Activated CD4-positive, alpha-beta T cell treated with anti-CD3 and anti-CD28 coated beads for 36 hours (primary cell): ENCODE measurements at regions of chr18 and their contacts with region 1.

Region 1: GRCh38 chr18:3129053-3129864 is 90.5 kb downstream of the MYOM1 start:
- DNase-seq: peak; percentile 92
- ATAC-seq: peak; percentile 99
- H3K4me3 Mint-ChIP-seq: no peak overlapping the region
- H3K27ac Mint-ChIP-seq: no peak overlapping the region
- H3K4me1 Mint-ChIP-seq: peaks cover 10% of the 10 kb centered on the region
- H3K27me3 Mint-ChIP-seq: no peaks in the 10 kb centered on the region

Region 2: DNA sequence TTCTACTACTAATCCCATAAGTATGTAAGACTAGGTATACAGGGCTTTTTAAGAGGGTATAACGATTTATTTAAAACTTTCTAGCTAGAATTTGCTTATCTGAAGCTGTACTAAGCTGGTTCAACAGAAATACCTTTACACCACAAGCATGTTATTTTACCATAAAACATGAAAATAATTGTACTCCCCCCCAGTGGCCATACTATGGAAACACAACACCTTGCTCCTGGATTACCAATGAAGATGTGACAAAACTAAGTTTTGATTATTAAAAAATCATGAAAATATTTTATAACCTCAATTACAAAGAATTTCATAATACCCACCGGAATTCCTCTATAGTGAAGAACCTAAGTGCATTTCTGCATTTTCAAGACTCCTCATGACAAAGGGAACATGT is 143.6 kb before region 1 on chr18:
- CTCF ChIA-PET with region 1: interaction called, 27 read pairs
- POLR2A ChIA-PET with region 1: no interaction called
- intact Hi-C with region 1: no loop called
- DNase-seq: no peak
- ATAC-seq: no peak
- H3K4me3 Mint-ChIP-seq: no peak overlapping the region
- H3K27ac Mint-ChIP-seq: no peak overlapping the region
- H3K4me1 Mint-ChIP-seq: peaks cover 75% of the 10 kb centered on the region
- H3K27me3 Mint-ChIP-seq: no peaks in the 10 kb centered on the region

Region 3: DNA sequence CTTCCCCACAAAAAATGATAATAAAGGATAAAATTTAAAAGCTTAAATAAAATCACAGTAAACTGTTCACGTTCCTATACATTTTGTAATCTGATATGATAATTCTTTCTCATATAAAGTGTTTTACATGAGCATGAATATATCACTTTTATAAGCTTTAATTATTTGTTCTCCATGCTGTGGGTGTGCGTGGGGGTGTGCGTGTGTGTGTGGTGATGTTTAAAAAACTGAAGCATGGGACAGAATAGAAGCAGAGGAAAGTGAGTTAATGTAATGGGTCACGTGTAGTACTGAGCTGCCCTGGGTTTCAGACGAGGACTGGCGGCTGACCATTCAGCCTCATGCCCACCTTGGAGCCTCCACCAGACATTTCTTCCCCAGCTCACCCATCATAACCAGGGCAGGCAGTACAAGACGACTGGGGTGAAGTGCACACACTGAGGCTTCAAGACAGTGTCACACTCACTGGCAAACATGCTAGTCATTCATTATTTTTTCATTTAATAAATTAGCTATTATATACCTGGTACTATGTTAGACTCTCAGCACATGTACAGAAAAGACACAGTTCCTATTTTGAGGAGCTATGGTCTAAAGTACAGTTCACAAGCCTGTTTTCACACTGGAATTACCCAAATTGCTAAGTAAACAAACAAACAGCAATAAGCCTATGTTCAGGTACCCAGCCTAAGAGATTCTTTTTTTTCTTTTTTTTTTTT is 19.1 kb before region 1 on chr18:
- CTCF ChIA-PET with region 1: interaction called, 24 read pairs
- POLR2A ChIA-PET with region 1: no interaction called
- intact Hi-C with region 1: no loop called
- DNase-seq: no peak
- ATAC-seq: no peak
- H3K4me3 Mint-ChIP-seq: no peak overlapping the region
- H3K27ac Mint-ChIP-seq: no peak overlapping the region
- H3K4me1 Mint-ChIP-seq: no peaks in the 10 kb centered on the region
- H3K27me3 Mint-ChIP-seq: no peaks in the 10 kb centered on the region

Region 4: DNA sequence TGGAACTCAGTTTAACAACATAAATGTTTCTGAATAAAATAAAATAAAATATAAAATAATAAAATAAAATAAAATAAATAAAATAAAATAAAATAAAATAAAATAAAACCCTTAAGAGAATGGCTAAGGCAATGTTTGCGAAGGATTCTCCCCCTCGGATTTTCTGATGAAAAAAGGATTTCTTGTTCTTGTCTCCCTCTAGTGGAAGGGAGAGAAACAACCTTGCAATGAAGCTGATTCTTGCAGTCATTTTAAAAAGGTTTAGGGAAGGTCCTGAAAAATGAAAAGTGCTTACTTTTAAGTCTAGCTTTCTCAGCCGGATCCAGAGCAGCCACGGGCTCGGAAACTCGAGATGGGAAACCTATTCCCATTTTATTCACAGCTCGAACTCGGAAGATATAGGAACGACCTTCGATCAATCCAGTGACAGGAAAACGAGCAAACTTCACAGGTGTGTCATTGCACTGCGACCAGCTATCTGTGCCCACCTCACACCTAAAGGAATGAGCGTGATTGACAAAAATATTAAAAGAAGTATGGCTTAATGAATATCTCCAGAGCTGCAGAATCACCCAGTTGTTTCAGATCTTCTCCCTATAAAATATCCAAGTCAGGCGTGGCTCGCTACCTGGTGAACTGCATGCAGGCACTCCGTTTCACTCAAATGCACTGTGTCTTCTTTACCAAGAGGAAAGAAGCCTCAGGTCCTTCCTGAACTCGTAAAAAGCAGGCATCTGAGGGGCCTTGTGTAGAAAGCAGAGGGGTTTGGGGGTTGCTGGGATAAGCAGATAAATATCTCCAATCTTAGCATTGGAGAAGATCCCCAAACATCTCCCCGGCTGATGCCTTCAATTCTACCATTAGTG is 22.4 kb after region 1 on chr18:
- CTCF ChIA-PET with region 1: interaction called, 27 read pairs
- POLR2A ChIA-PET with region 1: no interaction called
- intact Hi-C with region 1: no loop called
- DNase-seq: no peak
- ATAC-seq: no peak
- H3K4me3 Mint-ChIP-seq: no peak overlapping the region
- H3K27ac Mint-ChIP-seq: no peak overlapping the region
- H3K4me1 Mint-ChIP-seq: peaks cover 4% of the 10 kb centered on the region
- H3K27me3 Mint-ChIP-seq: no peaks in the 10 kb centered on the region